Aorta (tissue), 5 donors: ENCODE measurements at regions of chr20 and their contacts with region 1.

Region 1: GRCh38 chr20:4720041-4720976 is 1.4 kb upstream of the PRND start:
- DNase-seq: peak; percentile 87
- ATAC-seq: peak; percentile 86
- H3K4me3 ChIP-seq: no peak overlapping the region
- H3K27ac ChIP-seq: no peak overlapping the region
- H3K4me1 ChIP-seq: no peaks in the 10 kb centered on the region
- H3K27me3 ChIP-seq: no peaks in the 10 kb centered on the region

Region 2: GRCh38 chr20:4108495-4109306 is 611.6 kb before region 1 on chr20:
- intact Hi-C with region 1: loop called in 1 of 2 experiments (anchors 10 kb)
- DNase-seq: peak in 1 of 2 donors; percentile 76
- ATAC-seq: peak; percentile 79
- H3K4me3 ChIP-seq: no peak overlapping the region
- H3K27ac ChIP-seq: no peak overlapping the region
- H3K4me1 ChIP-seq: no peaks in the 10 kb centered on the region
- H3K27me3 ChIP-seq: no peaks in the 10 kb centered on the region

Region 3: GRCh38 chr20:4607287-4607713 is 113.0 kb before region 1 on chr20:
- intact Hi-C with region 1: loop called (anchors 1 kb)
- DNase-seq: no peak
- ATAC-seq: peak; percentile 73
- H3K4me3 ChIP-seq: no peak overlapping the region
- H3K27ac ChIP-seq: no peak overlapping the region
- H3K4me1 ChIP-seq: no peaks in the 10 kb centered on the region
- H3K27me3 ChIP-seq: no peaks in the 10 kb centered on the region